ENCODE measurements at regions of chr20 and their contacts with region 1.

Region 1: GRCh38 chr20:36541227-36541763 is at the start of gene MYL9:
- DNase-seq: peak; percentile 89
- H3K4me3 ChIP-seq: peak within 1 kb of the TSS; percentile 56 to 89 (median 58)
- H3K27ac ChIP-seq: peak within 1 kb of the TSS; percentile 80 to 99 (median 90)
- H3K4me1 ChIP-seq: peaks cover 3 to 25% (median 15%) of the 10 kb centered on the region in 4 donors
- H3K27me3 ChIP-seq: no peaks in the 10 kb centered on the region
- CTCF ChIP-seq: no peak
- EP300 ChIP-seq: no peak
- POLR2A ChIP-seq: peak; percentile 41
- total RNA-seq, gene MYL9: 156 to 974 (median 332) TPM

Region 2: GRCh38 chr20:36460648-36461599 is 80.4 kb before region 1 on chr20:
- in situ Hi-C with region 1: no loop called
- intact Hi-C with region 1: loop called (anchors 5 kb)
- DNase-seq: peak; percentile 96
- H3K4me3 ChIP-seq: peak overlapping the region; percentile 14 to 89 (median 74)
- H3K27ac ChIP-seq: peak overlapping the region; percentile 93 to 94 (median 94)
- H3K4me1 ChIP-seq: peaks cover 21 to 47% (median 43%) of the 10 kb centered on the region in 4 donors
- H3K27me3 ChIP-seq: no peaks in the 10 kb centered on the region
- CTCF ChIP-seq: no peak
- EP300 ChIP-seq: no peak
- POLR2A ChIP-seq: peak; percentile 67

Measured in transverse colon (tissue), 4 donors.